Head of caudate nucleus (tissue), 42 donors: ENCODE measurements at regions of chr17 and their contacts with region 1.

Region 1: DNA sequence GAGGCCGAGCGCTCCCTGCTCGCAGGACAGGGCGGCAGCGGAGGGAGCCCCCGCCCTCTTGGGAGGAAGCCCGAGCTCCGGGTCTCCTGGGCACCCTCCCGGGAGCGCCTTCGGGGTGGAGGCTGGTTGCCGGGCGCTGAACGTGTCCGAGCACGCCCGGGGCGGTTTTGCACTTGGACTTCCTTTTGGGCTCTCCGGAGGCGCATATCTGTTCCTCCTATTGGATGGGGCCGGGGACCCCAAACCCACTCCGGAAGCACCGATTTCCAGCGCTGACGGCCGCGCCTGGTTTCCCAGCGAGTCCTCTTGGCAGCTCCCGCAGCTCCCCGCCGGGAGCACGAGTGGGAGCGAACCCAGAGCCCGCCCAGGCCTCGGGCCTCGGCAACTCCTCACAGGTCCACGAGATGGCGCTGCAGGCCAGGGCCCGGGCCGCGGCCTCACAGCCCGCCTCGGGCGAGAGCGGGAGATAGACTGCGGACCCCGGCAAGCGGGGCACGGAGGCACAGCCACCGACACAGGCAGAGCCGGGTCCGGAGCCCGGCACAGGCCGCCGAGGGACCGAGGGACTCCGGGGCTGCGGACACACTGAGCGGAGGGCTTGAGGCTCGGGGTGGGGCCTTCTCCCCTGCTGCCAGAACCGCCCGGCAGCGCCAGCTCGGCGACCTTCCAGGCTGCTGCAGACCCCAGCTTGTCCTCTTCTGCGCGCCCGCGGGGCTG is 12.7 kb downstream of the TBX2 start:
- DNase-seq: peak; percentile 54 to 92 (median 83)

Region 2: DNA sequence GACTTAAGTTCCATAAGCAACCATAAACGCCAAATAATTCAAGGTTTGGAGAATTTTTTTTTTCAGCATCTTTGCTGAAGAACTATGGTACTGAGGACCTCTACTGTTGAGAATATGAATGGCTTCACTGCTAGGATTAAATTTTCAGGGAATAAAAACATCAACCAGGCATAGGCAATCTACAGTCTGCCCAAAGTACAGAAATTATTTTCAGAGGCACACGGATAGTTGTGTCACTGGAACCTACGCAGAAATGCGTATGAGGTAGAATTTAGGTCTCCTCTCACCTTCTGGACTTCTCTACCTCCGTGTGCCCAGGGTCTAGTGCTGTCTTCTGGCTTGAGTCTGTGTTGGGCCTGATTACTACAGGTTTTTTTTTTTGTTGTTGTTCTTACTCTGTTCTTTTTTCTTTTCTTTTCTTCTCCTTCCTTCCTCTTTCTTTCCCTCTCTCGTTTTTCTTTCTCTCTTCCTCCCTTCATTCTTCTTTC is 139.0 kb after region 1 on chr17:
- intact Hi-C with region 1: loop called (anchors 5 kb)
- DNase-seq: peak in 1 of 42 donors; percentile 5

Region 3: GRCh38 chr17:62065598-62066468 is 653.5 kb after region 1 on chr17:
- intact Hi-C with region 1: loop called (anchors 5 kb)
- DNase-seq: peak; percentile 96 to 100 (median 99)